Activated CD8-positive, alpha-beta memory T cell treated with anti-CD3 and anti-CD28 coated beads, Interleukin-2, amount 10 ng/mL, durations not matched to agents 7 days and 5 days (primary cell): ENCODE measurements at regions of chr10 and their contacts with region 1.

Region 1: GRCh38 chr10:128011175-128011979 is 104.5 kb downstream of the PTPRE start:
- DNase-seq: peak; percentile 85
- ATAC-seq: peak; percentile 95
- H3K4me3 Mint-ChIP-seq: no peak overlapping the region
- H3K27ac Mint-ChIP-seq: no peak overlapping the region
- H3K4me1 Mint-ChIP-seq: peaks cover 6% of the 10 kb centered on the region
- H3K27me3 Mint-ChIP-seq: peaks cover 20% of the 10 kb centered on the region

Region 2: DNA sequence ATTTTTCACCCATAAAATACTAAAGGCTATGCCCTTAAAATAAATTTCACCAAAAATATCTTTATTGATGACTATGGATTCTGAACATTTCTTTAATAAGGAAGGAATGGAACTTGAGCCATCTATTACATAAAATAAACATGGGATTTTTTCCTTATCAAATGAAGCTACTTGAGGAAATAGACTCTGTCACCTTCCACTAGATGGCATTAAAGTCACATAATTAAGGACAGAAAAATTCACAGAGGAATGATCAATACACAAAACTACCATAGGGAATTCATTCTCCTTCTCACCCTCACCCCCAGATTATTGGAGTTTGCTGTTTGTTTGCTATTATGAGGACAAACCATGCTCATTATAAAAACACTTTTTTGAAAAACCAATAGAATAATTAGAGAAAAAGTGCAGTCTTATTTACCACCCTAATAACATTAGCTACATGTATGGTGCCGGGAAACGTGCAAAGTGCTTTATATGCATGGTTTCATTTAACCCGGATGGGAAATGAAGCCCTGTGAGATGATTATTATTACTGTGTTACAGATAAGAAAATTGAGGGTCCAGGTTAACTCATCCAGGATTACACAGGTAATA is 295.5 kb before region 1 on chr10:
- CTCF ChIA-PET with region 1: interaction called, 13 read pairs
- DNase-seq: no peak
- ATAC-seq: no peak
- H3K4me3 Mint-ChIP-seq: no peak overlapping the region
- H3K27ac Mint-ChIP-seq: no peak overlapping the region
- H3K4me1 Mint-ChIP-seq: no peaks in the 10 kb centered on the region
- H3K27me3 Mint-ChIP-seq: no peaks in the 10 kb centered on the region

Region 3: GRCh38 chr10:127926455-127926854 is 84.9 kb before region 1 on chr10:
- CTCF ChIA-PET with region 1: interaction called, 10 read pairs
- DNase-seq: no peak
- ATAC-seq: no peak
- H3K4me3 Mint-ChIP-seq: no peak overlapping the region
- H3K27ac Mint-ChIP-seq: no peak overlapping the region
- H3K4me1 Mint-ChIP-seq: peaks cover 5% of the 10 kb centered on the region
- H3K27me3 Mint-ChIP-seq: peaks cover 9% of the 10 kb centered on the region

Region 4: DNA sequence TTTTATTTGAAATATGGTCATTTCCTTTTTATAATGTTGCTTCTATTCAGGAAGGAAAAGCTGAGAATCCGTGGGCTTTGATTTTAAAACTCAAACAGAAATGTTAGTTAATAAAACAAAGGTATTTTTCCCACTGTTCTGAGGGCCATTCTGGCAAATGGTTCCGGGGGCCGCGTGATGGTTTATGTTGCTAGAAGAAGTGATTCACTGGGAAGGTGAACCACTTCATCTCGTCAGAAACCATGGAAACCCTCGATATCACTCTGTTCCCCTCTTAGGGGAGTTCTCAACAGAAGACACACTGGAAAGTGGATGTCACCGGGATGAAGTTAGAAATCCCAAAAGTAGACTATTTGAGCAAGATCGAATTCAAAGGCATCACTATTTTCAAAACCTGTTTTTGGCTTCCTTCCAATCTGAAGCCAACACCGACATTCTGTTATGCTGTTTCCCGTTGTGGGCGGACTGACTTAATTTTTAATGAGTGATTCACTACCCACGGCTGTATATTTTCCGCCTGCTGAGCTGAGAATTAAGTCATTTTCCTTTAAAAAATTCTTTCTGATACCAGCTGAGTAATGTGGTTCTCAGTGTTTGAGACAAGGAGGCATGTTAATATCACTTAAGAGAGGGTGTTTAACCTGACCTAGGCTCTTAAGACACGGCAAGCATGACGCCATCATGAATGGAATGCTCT is 20.4 kb before region 1 on chr10:
- CTCF ChIA-PET with region 1: interaction called, 16 read pairs
- DNase-seq: peak; percentile 61
- ATAC-seq: peak; percentile 61
- H3K4me3 Mint-ChIP-seq: peak overlapping the region; percentile 23
- H3K27ac Mint-ChIP-seq: peak overlapping the region; percentile 29
- H3K4me1 Mint-ChIP-seq: peaks cover 38% of the 10 kb centered on the region
- H3K27me3 Mint-ChIP-seq: peaks cover 8% of the 10 kb centered on the region

Region 5: GRCh38 chr10:128069351-128070051 is 58.1 kb after region 1 on chr10:
- CTCF ChIA-PET with region 1: interaction called, 43 read pairs
- DNase-seq: peak; percentile 84
- ATAC-seq: peak; percentile 63
- H3K4me3 Mint-ChIP-seq: no peak overlapping the region
- H3K27ac Mint-ChIP-seq: no peak overlapping the region
- H3K4me1 Mint-ChIP-seq: peaks cover 39% of the 10 kb centered on the region
- H3K27me3 Mint-ChIP-seq: no peaks in the 10 kb centered on the region